ENCODE measurements at regions of chr6 and their contacts with region 1.

Region 1: GRCh38 chr6:139881728-139882211 is 507.3 kb upstream of the CITED2 start:
- DNase-seq: peak; percentile 41
- CTCF ChIP-seq: peak; percentile 23

Region 2: DNA sequence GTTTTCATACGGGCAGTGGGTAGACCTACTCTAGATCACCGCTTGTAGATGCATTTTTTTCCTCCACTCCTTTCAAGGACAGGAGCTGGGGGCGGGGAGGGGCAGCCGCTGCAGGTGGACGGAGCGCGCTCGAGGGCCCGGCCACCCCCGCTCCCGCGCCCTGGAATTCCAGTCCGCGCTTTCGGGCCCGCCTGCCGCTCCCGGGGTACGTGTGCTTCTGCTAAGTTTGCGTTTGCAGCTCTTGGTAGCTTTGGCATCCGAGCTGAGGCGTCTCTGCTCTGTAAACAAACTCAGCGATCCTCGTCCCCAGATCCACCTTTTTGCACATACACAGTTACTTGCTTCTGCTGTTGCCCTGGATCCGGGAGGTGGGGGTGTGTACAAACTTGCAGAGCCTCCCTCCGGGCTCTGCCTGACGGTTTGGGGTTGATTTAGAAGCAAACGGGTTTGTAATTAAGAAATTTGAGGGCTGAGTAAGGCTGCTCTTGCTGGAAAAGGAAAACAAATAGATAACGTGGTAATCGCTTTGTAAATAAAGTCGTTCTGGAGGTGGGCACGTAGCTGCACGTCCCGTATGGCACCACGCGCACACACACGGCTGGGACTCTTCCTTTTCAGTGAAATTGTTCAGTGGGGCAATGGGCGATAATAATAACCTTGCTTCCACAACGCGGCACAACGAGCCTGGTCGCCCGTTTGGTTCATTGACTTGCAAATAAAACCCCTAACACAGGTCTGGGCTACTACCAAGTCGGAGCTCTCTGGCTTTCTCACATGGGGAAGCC is 506.3 kb before region 1 on chr6:
- in situ Hi-C with region 1: loop called (anchors 25 kb)
- DNase-seq: peak; percentile 80
- CTCF ChIP-seq: no peak

Measured in GM13976 (cell line).